Activated CD4-positive, alpha-beta T cell treated with anti-CD3 and anti-CD28 coated beads, Interleukin-2, amount 10 ng/mL, durations not matched to agents 24 days and 14 days (primary cell): ENCODE measurements at regions of chr10 and their contacts with region 1.

Region 1: GRCh38 chr10:59240582-59241183 is 64.2 kb downstream of the PHYHIPL start:
- DNase-seq: no peak
- H3K4me3 Mint-ChIP-seq: no peak overlapping the region
- H3K27ac Mint-ChIP-seq: no peak overlapping the region
- H3K4me1 Mint-ChIP-seq: no peaks in the 10 kb centered on the region
- H3K27me3 Mint-ChIP-seq: peaks cover 2% of the 10 kb centered on the region

Region 2: DNA sequence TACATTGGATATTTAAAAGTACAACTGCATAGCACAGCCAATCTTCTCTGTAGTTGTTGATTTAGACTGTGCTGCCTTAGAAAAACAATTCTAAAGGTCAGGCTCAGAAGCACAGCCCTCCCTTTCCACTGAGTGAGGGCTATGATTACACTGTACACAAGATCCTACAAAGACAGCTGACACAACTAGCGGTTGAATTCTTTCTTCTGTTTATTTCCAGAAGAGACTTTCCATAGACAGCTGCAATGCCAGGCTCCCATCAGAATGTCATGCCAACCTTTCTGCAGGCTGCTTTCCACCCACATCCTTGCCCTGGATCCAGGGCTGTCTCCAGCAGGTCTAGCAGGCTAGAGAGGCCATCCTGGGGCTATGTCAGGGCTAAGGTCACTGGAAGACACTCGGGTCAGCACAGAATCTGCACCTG is 82.4 kb after region 1 on chr10:
- intact Hi-C with region 1: no loop called
- DNase-seq: no peak
- H3K4me3 Mint-ChIP-seq: no peak overlapping the region
- H3K27ac Mint-ChIP-seq: no peak overlapping the region
- H3K4me1 Mint-ChIP-seq: no peaks in the 10 kb centered on the region
- H3K27me3 Mint-ChIP-seq: no peaks in the 10 kb centered on the region

Region 3: GRCh38 chr10:60048091-60048501 is 807.4 kb after region 1 on chr10:
- intact Hi-C with region 1: loop called (anchors 10 kb)
- DNase-seq: peak; percentile 45
- H3K4me3 Mint-ChIP-seq: no peak overlapping the region
- H3K27ac Mint-ChIP-seq: no peak overlapping the region
- H3K4me1 Mint-ChIP-seq: no peaks in the 10 kb centered on the region
- H3K27me3 Mint-ChIP-seq: no peaks in the 10 kb centered on the region